ENCODE measurements at regions of chr9 and their contacts with region 1.

Region 1: DNA sequence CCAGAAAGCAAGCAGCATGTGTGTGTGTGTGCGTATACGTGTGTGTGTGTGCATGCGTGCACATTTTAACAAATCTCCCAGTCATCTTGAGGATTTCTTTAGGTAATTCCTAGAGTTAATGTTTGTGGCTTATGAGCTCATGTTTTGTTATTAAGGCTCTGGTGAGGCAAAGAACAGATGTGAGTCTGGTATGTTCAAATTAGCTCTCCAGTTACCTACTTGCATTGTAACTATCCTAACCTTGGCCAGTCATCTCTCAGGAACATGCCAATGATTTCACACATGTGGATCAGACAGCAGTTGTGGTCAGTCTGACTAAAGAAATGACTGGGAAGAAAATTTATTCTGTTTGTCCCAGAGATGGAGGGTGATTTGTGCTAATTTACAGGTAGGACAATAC is 163.1 kb downstream of the IZUMO3 start:
- DNase-seq: no peak
- ATAC-seq: no peak
- H3K4me3 ChIP-seq: no peak overlapping the region
- H3K4me1 ChIP-seq: no peaks in the 10 kb centered on the region
- CTCF ChIP-seq: no peak

Region 2: GRCh38 chr9:24333629-24334028 is 48.9 kb before region 1 on chr9:
- intact Hi-C with region 1: loop called in 1 of 2 experiments (anchors 10 kb)
- DNase-seq: no peak
- ATAC-seq: no peak
- H3K4me3 ChIP-seq: no peak overlapping the region
- H3K4me1 ChIP-seq: no peaks in the 10 kb centered on the region
- CTCF ChIP-seq: no peak

Measured in mucosa of descending colon (tissue), 3 donors.